ENCODE measurements at regions of chr2 and their contacts with region 1.

Region 1: GRCh38 chr2:97710596-97711386 is 2.6 kb upstream of the ZAP70 start:
- DNase-seq: peak in 1 of 9 donors; percentile 50
- ATAC-seq: no peak
- H3K4me3 ChIP-seq: no peak overlapping the region
- H3K4me3 Mint-ChIP-seq: peak overlapping the region in 9 of 10 donors; percentile 12 to 98 (median 38)
- H3K27ac ChIP-seq: peak overlapping the region; percentile 95
- H3K27ac Mint-ChIP-seq: peak overlapping the region; percentile 12 to 100 (median 97)
- H3K4me1 ChIP-seq: peaks cover 35 to 42% of the 10 kb centered on the region in 2 donors
- H3K4me1 Mint-ChIP-seq: peaks cover 42 to 62% (median 48%) of the 10 kb centered on the region in 7 donors
- H3K27me3 ChIP-seq: no peaks in the 10 kb centered on the region
- H3K27me3 Mint-ChIP-seq: peaks cover 0 to 2% (median 0%) of the 10 kb centered on the region in 5 donors

Region 2: GRCh38 chr2:97740590-97741182 is 29.9 kb after region 1 on chr2:
- CTCF ChIA-PET with region 1: interaction called, 43 read pairs
- POLR2A ChIA-PET with region 1: interaction called, 23 read pairs
- intact Hi-C with region 1: no loop called
- DNase-seq: peak in 5 of 9 donors; percentile 13 to 33 (median 30)
- ATAC-seq: peak; percentile 63
- H3K4me3 ChIP-seq: no peak overlapping the region
- H3K4me3 Mint-ChIP-seq: no peak overlapping the region
- H3K27ac ChIP-seq: no peak overlapping the region
- H3K27ac Mint-ChIP-seq: peak overlapping the region in 8 of 9 donors; percentile 54 to 86 (median 78)
- H3K4me1 ChIP-seq: peaks cover 15 to 55% of the 10 kb centered on the region in 2 donors
- H3K4me1 Mint-ChIP-seq: peaks cover 44 to 66% (median 55%) of the 10 kb centered on the region in 7 donors
- H3K27me3 ChIP-seq: no peaks in the 10 kb centered on the region
- H3K27me3 Mint-ChIP-seq: no peaks in the 10 kb centered on the region

Region 3: DNA sequence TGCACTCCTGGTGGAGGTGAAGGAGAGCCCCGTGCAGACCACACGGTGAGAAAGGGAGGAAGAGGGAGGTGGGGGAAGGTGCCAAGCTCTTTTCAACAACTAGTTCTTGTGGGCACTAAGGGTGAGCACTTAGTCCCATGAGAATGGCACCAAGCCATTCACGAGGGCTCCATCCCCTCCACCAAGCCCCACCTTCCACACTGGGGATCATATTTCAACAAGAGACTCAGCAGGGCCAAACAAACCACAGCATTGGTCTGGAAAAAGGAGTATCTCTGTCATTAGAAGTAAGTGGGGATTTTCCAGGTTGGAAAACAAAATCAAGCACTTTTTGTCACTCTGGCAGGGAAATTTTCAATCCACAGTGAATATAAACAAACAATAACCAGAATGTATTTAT is 41.0 kb after region 1 on chr2:
- CTCF ChIA-PET with region 1: interaction called, 43 read pairs
- POLR2A ChIA-PET with region 1: interaction called, 6 read pairs
- intact Hi-C with region 1: loop called (anchors 1 kb)
- DNase-seq: no peak
- ATAC-seq: no peak
- H3K4me3 ChIP-seq: no peak overlapping the region
- H3K4me3 Mint-ChIP-seq: no peak overlapping the region
- H3K27ac ChIP-seq: no peak overlapping the region
- H3K27ac Mint-ChIP-seq: peak overlapping the region in 2 of 9 donors; percentile 3 to 33
- H3K4me1 ChIP-seq: peaks cover 10 to 18% of the 10 kb centered on the region in 2 donors
- H3K4me1 Mint-ChIP-seq: peaks cover 14 to 29% (median 22%) of the 10 kb centered on the region in 7 donors
- H3K27me3 ChIP-seq: no peaks in the 10 kb centered on the region
- H3K27me3 Mint-ChIP-seq: no peaks in the 10 kb centered on the region

Region 4: GRCh38 chr2:98385050-98385699 is 674.4 kb after region 1 on chr2:
- CTCF ChIA-PET with region 1: interaction called, 5 read pairs
- POLR2A ChIA-PET with region 1: no interaction called
- intact Hi-C with region 1: loop called in 1 of 2 experiments (anchors 1 kb)
- DNase-seq: peak; percentile 32 to 70 (median 53)
- ATAC-seq: peak; percentile 88
- H3K4me3 ChIP-seq: no peak overlapping the region
- H3K4me3 Mint-ChIP-seq: no peak overlapping the region
- H3K27ac ChIP-seq: no peak overlapping the region
- H3K27ac Mint-ChIP-seq: peak overlapping the region in 1 of 9 donors; percentile 25
- H3K4me1 ChIP-seq: no peaks in the 10 kb centered on the region
- H3K4me1 Mint-ChIP-seq: peaks cover 0 to 4% (median 0%) of the 10 kb centered on the region in 7 donors
- H3K27me3 ChIP-seq: no peaks in the 10 kb centered on the region
- H3K27me3 Mint-ChIP-seq: peaks cover 3 to 13% (median 4%) of the 10 kb centered on the region in 5 donors